ENCODE measurements at regions of chr4 and their contacts with region 1.

Region 1: DNA sequence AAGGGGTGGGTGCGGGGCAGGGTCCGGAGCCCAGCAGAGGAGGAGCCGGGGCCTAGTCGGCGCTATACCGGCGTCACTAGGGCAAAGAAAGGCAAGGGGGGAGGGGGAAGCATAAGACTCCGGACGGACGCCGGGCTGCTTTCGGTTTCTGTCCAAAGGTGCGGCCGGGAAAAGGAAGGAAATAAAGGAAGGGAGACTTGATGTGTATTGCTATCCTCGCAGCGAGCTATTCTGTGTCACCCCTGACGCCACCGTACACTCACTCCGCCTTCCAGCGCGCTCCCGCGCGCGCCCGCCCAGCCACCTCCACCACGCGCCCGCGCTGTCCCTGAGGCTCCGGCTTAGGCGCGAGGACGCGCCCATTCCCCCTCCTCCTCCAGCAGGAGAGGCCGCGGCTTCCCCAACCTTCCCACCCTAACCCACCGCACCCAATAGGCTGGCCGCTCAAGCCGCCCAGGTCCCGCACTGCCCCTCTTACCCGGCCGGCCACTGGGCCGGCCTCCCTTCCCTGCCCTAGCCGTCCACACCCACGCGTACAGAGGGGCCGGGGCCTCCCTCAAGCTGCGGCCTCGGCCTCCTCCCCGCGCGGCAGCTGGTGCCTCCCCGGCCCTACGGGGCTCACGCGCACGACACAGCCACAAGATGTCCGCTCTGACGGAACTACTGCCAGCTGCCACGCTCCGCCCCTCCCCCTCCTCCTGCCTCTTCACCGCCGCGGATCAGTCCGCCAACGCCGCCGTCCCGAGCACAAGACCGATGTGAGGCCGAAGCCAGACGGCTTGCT is at the start of gene UBE2D3:
- DNase-seq: peak; percentile 93
- H3K4me3 ChIP-seq: peak within 1 kb of the TSS; percentile 96 to 99
- H3K27ac ChIP-seq: peak within 1 kb of the TSS; percentile 100
- H3K4me1 ChIP-seq: peaks cover 23% of the 10 kb centered on the region
- H3K27me3 ChIP-seq: no peaks in the 10 kb centered on the region
- CTCF ChIP-seq: peak in 1 of 3 experiments; percentile 0
- POLR2A ChIP-seq: peak; percentile 55
- total RNA-seq, gene UBE2D3: 357 to 363 TPM

Region 2: DNA sequence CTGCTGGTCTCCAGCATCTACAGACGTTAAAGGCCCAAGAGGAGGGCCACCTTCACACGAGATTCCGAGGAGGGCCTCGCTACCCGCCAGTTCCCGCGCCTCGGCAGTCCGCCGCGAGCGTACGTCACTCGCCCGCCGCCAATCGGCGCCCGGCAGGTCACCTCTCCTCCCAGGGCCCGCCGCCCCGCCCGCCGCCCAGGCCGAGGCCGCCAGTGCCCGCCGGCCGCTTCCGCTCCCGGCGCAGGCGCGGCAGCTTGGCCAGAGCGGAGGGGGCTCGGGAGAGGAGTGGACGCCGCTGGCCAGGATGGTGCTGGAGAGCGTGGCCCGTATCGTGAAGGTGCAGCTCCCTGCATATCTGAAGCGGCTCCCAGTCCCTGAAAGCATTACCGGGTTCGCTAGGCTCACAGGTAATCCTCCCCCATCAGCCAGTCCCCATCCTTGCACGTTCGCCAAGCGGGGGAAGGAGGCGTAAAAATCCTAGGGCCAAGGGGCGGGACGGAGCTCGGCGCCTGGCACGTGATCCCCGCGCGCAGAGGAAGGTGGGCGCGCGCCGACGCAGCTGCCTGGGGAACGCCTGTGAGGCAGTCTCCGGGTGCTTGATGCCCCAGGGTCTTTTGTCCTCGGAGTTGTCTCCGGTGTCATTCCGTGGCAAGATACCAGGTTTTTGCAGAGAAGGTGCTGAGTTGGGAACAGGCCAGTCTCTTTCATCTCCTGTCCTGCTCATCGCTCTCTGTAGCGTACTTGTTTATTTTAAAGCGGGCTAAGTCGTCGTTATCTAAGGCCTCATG is 41.9 kb after region 1 on chr4 and contains the start of gene CISD2:
- intact Hi-C with region 1: loop called (anchors 5 kb)
- DNase-seq: peak; percentile 93
- H3K4me3 ChIP-seq: peak within 1 kb of the TSS; percentile 68 to 85
- H3K27ac ChIP-seq: peak within 1 kb of the TSS; percentile 98
- H3K4me1 ChIP-seq: no peaks in the 10 kb centered on the region
- H3K27me3 ChIP-seq: no peaks in the 10 kb centered on the region
- CTCF ChIP-seq: no peak
- POLR2A ChIP-seq: peak; percentile 60
- total RNA-seq, gene CISD2: 8.4 to 10.3 TPM